GM23248 (cell line): ENCODE measurements at regions of chr9 and their contacts with region 1.

Region 1: DNA sequence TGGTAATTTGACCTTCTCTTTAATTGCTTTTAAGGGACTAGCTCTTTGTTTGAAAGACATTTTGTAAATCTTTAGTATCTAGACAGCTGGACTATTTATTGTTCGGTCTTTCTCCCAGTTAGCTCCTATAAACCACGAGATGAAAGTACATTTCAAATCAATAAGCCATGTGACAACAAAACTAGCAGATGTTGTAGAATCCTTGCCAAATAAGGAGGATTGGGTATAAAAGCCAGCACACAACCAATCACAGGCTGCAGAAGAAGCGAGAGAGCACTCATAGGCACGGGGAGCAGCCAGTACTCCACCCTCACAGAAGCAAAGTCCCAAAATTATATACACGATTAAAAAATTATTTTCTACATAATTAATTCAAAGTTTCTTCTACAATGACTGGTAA is 8.1 kb upstream of the OMD start:
- DNase-seq: no peak
- H3K4me3 ChIP-seq: no peak overlapping the region
- H3K27ac ChIP-seq: no peak overlapping the region
- H3K4me1 ChIP-seq: no peaks in the 10 kb centered on the region
- H3K27me3 ChIP-seq: no peaks in the 10 kb centered on the region

Region 2: GRCh38 chr9:92349771-92350739 is 82.3 kb before region 1 on chr9:
- in situ Hi-C with region 1: loop called (anchors 5 kb)
- DNase-seq: peak; percentile 70
- H3K4me3 ChIP-seq: peak overlapping the region; percentile 51
- H3K27ac ChIP-seq: peak overlapping the region; percentile 73
- H3K4me1 ChIP-seq: peaks cover 17% of the 10 kb centered on the region
- H3K27me3 ChIP-seq: no peaks in the 10 kb centered on the region

Region 3: DNA sequence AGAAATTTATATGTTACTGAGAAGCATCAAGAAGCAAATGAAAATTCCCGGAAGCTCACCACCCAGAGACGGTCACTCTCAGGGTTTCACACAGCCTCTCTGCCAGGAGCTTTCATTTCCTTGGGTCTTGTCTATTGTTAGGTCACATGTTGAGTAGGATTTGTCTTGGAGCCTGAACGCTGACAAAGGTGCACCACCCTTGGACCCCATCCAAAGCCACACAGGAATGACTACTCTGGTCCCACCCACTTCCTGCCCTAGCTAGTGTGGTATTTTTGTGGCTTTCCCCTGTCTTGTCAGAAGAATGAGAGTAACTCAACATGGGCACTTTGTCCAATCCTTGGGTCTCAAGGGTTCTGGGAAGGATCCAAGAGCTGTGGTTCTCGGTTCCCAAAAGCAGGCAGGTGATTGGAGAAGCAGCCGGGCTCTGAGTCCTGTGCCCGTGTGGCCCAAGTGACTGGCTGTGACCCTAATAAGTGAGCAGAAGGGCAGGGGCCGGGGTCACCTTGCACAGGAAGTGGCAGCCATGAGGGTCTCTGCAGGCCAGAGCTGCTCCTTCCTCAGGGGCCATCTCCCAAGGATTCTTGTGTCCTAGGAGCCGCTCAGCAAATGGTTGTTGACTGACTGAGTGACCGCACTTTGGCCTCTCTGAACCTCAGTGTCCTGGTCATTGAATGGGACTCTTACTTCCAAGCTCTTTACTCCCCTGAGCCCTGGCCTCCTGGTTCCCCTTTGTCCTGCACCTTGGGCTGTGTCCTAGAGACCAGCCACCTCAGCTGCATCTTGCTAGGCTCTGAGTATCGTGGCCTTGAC is 521.9 kb after region 1 on chr9:
- in situ Hi-C with region 1: no loop called
- DNase-seq: peak; percentile 30
- H3K4me3 ChIP-seq: no peak overlapping the region
- H3K27ac ChIP-seq: no peak overlapping the region
- H3K4me1 ChIP-seq: no peaks in the 10 kb centered on the region; the same call in 1 of the 2 replicates
- H3K27me3 ChIP-seq: no peaks in the 10 kb centered on the region; the same call in 1 of the 2 replicates